PC-9 (cell line): ENCODE measurements at regions of chr17 and their contacts with region 1.

Region 1: GRCh38 chr17:56672172-56672571 is 78.7 kb downstream of the NOG start:
- DNase-seq: no peak
- H3K4me3 ChIP-seq: no peak overlapping the region
- H3K27ac ChIP-seq: no peak overlapping the region
- H3K4me1 ChIP-seq: peaks cover 53% of the 10 kb centered on the region
- H3K27me3 ChIP-seq: no peaks in the 10 kb centered on the region
- CTCF ChIP-seq: no peak

Region 2: DNA sequence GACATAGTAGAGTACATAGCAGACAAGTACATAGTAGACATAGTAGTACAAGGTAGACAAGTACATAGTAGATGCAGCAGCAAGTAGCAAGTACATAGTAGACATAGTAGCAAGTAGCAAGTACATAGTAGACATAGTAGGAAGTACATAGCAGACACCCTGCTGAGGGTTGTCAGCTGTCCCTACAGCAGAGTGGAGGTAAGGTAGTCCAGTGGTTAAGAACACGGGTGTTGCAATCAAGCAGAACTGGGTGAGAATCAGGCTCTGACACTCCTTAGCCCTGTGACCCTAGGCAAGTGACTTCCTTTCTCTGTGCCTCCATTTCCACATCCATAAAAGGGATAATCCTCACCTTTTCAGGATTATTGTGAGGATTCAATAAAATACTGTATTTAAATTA is 16.0 kb after region 1 on chr17:
- CTCF ChIA-PET with region 1: no interaction called
- POLR2A ChIA-PET with region 1: no interaction called
- intact Hi-C with region 1: loop called (anchors 1 kb)
- DNase-seq: no peak
- H3K4me3 ChIP-seq: no peak overlapping the region
- H3K27ac ChIP-seq: no peak overlapping the region
- H3K4me1 ChIP-seq: peaks cover 15% of the 10 kb centered on the region
- H3K27me3 ChIP-seq: no peaks in the 10 kb centered on the region
- CTCF ChIP-seq: no peak

Region 3: DNA sequence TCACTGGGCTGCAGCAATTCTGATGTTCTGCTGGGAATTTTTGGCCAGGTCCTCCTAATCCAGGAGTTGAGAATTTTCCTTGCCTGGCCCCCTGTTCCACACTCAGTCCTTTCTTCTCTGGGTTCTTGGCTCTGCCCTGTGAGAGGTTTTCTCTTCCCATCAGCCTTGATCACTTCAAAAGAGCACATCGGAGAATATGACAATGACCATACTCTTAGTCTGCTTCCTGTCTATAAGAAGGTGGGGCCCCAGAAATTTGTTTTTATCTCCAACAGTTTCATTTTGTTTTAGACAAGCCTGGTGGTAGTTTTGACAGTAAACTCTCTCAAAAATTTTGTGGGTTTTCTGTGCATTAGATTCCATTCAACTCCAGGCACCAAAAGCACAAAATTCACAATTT is 90.8 kb after region 1 on chr17:
- CTCF ChIA-PET with region 1: no interaction called
- POLR2A ChIA-PET with region 1: no interaction called
- intact Hi-C with region 1: no loop called
- DNase-seq: no peak
- H3K4me3 ChIP-seq: no peak overlapping the region
- H3K27ac ChIP-seq: no peak overlapping the region
- H3K4me1 ChIP-seq: no peaks in the 10 kb centered on the region
- H3K27me3 ChIP-seq: peaks cover 9% of the 10 kb centered on the region; the same call in 1 of the 2 replicates
- CTCF ChIP-seq: no peak

Region 4: DNA sequence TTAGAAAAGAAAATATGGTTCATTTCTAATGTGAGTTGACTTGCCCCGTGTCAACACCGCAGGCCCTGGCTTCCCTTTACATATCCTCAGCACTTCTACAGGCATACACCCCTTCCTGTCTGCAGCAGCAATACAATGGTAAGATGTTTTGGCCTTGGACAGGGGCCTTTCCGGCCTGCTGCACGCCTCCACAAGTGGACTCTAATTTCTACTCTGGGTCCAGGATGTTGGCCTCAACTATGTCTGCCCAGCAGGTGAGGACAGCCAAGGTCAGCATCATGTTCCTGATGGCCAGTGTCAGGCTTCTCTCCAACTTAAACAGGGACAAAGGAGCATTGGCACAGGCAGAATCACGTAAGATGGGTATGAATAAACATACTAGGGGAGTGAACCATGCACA is 150.6 kb after region 1 on chr17:
- CTCF ChIA-PET with region 1: no interaction called
- POLR2A ChIA-PET with region 1: no interaction called
- intact Hi-C with region 1: no loop called
- DNase-seq: no peak
- H3K4me3 ChIP-seq: no peak overlapping the region
- H3K27ac ChIP-seq: no peak overlapping the region
- H3K4me1 ChIP-seq: 0 out of 2 replicates have a peak, but pooled peaks cover 17% of the 10 kb centered on the region
- H3K27me3 ChIP-seq: no peaks in the 10 kb centered on the region
- CTCF ChIP-seq: no peak